ENCODE measurements at regions of chr1 and their contacts with region 1.

Region 1: GRCh38 chr1:25430666-25431505 is at the start of gene MACO1:
- DNase-seq: peak; percentile 97 to 99 (median 97)
- H3K4me3 ChIP-seq: peak within 1 kb of the TSS; percentile 49 to 92
- H3K4me3 Mint-ChIP-seq: peak within 1 kb of the TSS; percentile 95 to 99 (median 97)
- H3K27ac ChIP-seq: peak within 1 kb of the TSS; percentile 95
- H3K27ac Mint-ChIP-seq: peak within 1 kb of the TSS; percentile 98 to 100 (median 100)
- H3K4me1 ChIP-seq: peaks cover 49% of the 10 kb centered on the region
- H3K4me1 Mint-ChIP-seq: peaks cover 40 to 56% (median 48%) of the 10 kb centered on the region in 4 donors
- H3K27me3 ChIP-seq: no peaks in the 10 kb centered on the region
- H3K27me3 Mint-ChIP-seq: no peaks in the 10 kb centered on the region
- total RNA-seq, gene MACO1: 20.6 TPM

Region 2: GRCh38 chr1:24744911-24745710 is 685.8 kb before region 1 on chr1 and contains the start of gene CLIC4:
- CTCF ChIA-PET with region 1: no interaction called
- POLR2A ChIA-PET with region 1: interaction called, 3 read pairs
- intact Hi-C with region 1: loop called (anchors 10 kb)
- DNase-seq: peak; percentile 98 to 99 (median 99)
- H3K4me3 ChIP-seq: peak within 1 kb of the TSS in 1 of 2 donors; percentile 58
- H3K4me3 Mint-ChIP-seq: peak within 1 kb of the TSS; percentile 83 to 93 (median 87)
- H3K27ac ChIP-seq: peak within 1 kb of the TSS; percentile 55
- H3K27ac Mint-ChIP-seq: peak within 1 kb of the TSS; percentile 58 to 90 (median 86)
- H3K4me1 ChIP-seq: peaks cover 26% of the 10 kb centered on the region
- H3K4me1 Mint-ChIP-seq: peaks cover 2 to 21% (median 11%) of the 10 kb centered on the region in 4 donors
- H3K27me3 ChIP-seq: no peaks in the 10 kb centered on the region
- H3K27me3 Mint-ChIP-seq: peaks cover 6 to 9% of the 10 kb centered on the region in 2 donors
- total RNA-seq, gene CLIC4: 3.0 to 3.8 TPM

Region 3: DNA sequence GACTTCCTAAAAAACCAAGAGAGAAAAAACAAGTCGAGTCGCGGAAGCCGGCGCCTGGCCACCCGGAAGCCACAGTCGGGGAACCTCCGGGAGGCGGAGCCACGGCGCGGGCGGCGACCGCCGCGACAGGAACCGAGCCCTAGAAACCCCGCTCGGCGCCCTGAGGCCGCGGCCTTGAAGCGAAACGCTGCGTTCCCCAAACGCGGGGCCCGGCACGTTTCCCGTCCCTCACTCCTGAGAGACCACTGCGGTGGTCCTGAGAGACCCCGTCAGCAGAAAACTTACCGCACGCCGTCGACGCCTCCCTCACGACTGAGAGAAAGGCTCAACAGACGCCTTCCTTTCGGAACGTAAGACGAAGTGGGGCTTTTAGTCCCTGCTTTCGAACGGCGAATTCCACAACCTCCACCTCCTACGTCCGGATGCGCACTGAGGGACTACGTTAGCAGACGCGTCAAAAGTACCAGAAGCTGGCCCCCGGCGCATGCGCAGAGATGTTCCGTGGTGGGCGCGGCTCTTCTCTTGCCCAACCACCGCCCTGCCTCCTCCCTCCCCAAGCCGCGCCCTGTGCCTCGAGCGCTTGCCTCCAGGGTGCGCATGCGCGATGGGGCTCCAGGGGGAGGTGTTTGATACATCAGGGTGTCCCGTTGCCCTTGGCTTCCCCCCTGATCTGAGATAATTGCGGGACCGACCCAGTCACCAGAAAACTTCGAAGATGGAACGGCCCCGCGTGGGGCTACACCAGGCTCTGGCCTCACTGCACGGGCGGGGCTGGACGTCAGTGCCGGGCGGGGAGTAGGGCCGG is 183.7 kb before region 1 on chr1 and contains the start of gene RSRP1:
- CTCF ChIA-PET with region 1: no interaction called
- POLR2A ChIA-PET with region 1: interaction called, 24 read pairs
- intact Hi-C with region 1: loop called (anchors 1 kb)
- DNase-seq: peak; percentile 99 to 100 (median 99)
- H3K4me3 ChIP-seq: peak within 1 kb of the TSS; percentile 89 to 98
- H3K4me3 Mint-ChIP-seq: peak within 1 kb of the TSS; percentile 96 to 100 (median 98)
- H3K27ac ChIP-seq: peak within 1 kb of the TSS; percentile 97
- H3K27ac Mint-ChIP-seq: peak within 1 kb of the TSS; percentile 99 to 100 (median 100)
- H3K4me1 ChIP-seq: peaks cover 45% of the 10 kb centered on the region
- H3K4me1 Mint-ChIP-seq: peaks cover 25 to 66% (median 39%) of the 10 kb centered on the region in 4 donors
- H3K27me3 ChIP-seq: no peaks in the 10 kb centered on the region
- H3K27me3 Mint-ChIP-seq: peaks cover 0 to 2% of the 10 kb centered on the region in 2 donors
- total RNA-seq, gene RSRP1: 470 to 494 TPM

Region 4: GRCh38 chr1:25442178-25442577 is 11.3 kb after region 1 on chr1:
- CTCF ChIA-PET with region 1: interaction called, 4 read pairs
- POLR2A ChIA-PET with region 1: interaction called, 19 read pairs
- intact Hi-C with region 1: no loop called
- DNase-seq: no peak
- H3K4me3 ChIP-seq: no peak overlapping the region
- H3K4me3 Mint-ChIP-seq: peak overlapping the region in 1 of 8 donors; percentile 39
- H3K27ac ChIP-seq: no peak overlapping the region
- H3K27ac Mint-ChIP-seq: peak overlapping the region in 2 of 7 donors; percentile 13 to 31
- H3K4me1 ChIP-seq: peaks cover 19% of the 10 kb centered on the region
- H3K4me1 Mint-ChIP-seq: peaks cover 24 to 47% (median 36%) of the 10 kb centered on the region in 4 donors
- H3K27me3 ChIP-seq: no peaks in the 10 kb centered on the region
- H3K27me3 Mint-ChIP-seq: no peaks in the 10 kb centered on the region

Region 5: DNA sequence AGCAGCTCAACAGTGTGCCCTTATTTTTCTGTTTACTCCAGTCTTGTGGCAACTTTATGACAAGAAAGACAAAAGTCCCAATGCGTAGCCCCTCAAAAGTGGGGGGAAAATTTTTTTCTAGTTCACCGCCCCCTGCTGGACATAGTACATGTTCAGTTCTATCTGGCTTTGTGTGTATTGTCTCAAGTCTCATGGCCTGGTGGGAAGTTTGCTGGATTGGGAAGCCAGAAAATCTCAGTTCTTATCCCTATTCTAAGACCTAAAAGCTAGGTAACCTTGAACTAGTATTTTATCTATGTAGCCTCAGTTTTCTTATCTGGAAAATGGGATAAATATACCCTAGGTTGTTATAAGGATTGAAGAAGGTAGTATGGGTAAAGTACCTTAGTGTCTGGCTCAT is 56.7 kb after region 1 on chr1:
- CTCF ChIA-PET with region 1: interaction called, 10 read pairs
- POLR2A ChIA-PET with region 1: interaction called, 3 read pairs
- intact Hi-C with region 1: no loop called
- DNase-seq: peak in 4 of 5 donors; percentile 20 to 26 (median 23)
- H3K4me3 ChIP-seq: no peak overlapping the region
- H3K4me3 Mint-ChIP-seq: no peak overlapping the region
- H3K27ac ChIP-seq: no peak overlapping the region
- H3K27ac Mint-ChIP-seq: peak overlapping the region in 5 of 7 donors; percentile 4 to 78 (median 50)
- H3K4me1 ChIP-seq: peaks cover 7% of the 10 kb centered on the region
- H3K4me1 Mint-ChIP-seq: peaks cover 2 to 11% (median 5%) of the 10 kb centered on the region in 4 donors
- H3K27me3 ChIP-seq: no peaks in the 10 kb centered on the region
- H3K27me3 Mint-ChIP-seq: no peaks in the 10 kb centered on the region

Region 6: GRCh38 chr1:26472901-26473845 is 1042.3 kb after region 1 on chr1:
- CTCF ChIA-PET with region 1: no interaction called
- POLR2A ChIA-PET with region 1: no interaction called
- intact Hi-C with region 1: loop called (anchors 10 kb)
- DNase-seq: peak; percentile 95 to 96 (median 95)
- H3K4me3 ChIP-seq: peak overlapping the region; percentile 53 to 85
- H3K4me3 Mint-ChIP-seq: peak overlapping the region; percentile 83 to 92 (median 89)
- H3K27ac ChIP-seq: peak overlapping the region; percentile 96
- H3K27ac Mint-ChIP-seq: peak overlapping the region; percentile 82 to 100 (median 93)
- H3K4me1 ChIP-seq: peaks cover 49% of the 10 kb centered on the region
- H3K4me1 Mint-ChIP-seq: peaks cover 33 to 66% (median 46%) of the 10 kb centered on the region in 4 donors
- H3K27me3 ChIP-seq: no peaks in the 10 kb centered on the region
- H3K27me3 Mint-ChIP-seq: no peaks in the 10 kb centered on the region

Measured in CD4-positive, alpha-beta memory T cell (primary cell).